Common myeloid progenitor, CD34-positive (primary cell): ENCODE measurements at regions of chr7 and their contacts with region 1.

Region 1: GRCh38 chr7:140242057-140243031 is 65.6 kb upstream of the KDM7A start:
- DNase-seq: peak; percentile 76 to 94 (median 89)
- H3K4me3 ChIP-seq: peak overlapping the region in 3 of 7 experiments; percentile 22 to 47 (median 32)
- H3K27ac ChIP-seq: peak overlapping the region in 1 of 2 experiments; percentile 82
- H3K4me1 ChIP-seq: peaks cover 11 to 20% (median 18%) of the 10 kb centered on the region in 4 experiments
- H3K27me3 ChIP-seq: no peaks in the 10 kb centered on the region

Region 2: DNA sequence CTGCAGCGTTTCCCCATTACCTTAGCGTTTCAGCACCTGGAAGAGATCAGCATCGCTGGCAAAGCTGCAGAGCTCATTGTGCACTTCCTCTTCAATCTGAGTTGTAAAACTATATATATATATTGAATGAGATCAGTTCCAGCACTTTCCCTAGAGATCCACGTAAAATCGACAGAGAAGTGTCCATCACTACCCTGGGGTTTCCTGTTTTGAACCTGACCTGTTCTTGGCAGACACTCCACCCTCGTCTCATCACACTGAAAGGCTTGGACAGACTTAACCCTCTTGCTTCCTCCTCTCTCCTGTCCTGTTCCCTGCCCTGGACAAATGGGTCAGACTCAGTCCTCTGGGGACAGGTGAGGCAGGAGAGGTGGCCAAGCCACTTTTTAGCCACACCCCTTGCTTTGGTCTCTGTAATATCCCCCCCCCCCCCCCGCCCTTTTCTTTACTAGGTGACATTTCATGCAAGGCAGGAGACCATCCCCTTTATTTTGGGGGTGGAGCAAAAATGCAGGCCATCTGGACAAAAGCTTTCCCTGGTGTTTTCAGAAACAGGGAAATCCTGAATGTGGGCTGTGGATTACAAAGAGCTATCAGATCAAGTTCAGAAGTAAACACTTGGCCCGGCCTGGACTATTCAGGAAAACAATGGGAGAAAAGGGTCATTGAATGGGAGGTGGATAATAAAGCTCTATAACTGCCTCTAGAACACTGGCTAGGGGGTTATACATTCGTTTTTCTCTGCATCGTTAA is 18.2 kb after region 1 on chr7:
- CTCF ChIA-PET with region 1: interaction called, 35 read pairs
- POLR2A ChIA-PET with region 1: no interaction called
- DNase-seq: peak in 1 of 3 donors; percentile 21
- H3K4me3 ChIP-seq: no peak overlapping the region
- H3K27ac ChIP-seq: no peak overlapping the region
- H3K4me1 ChIP-seq: peaks cover 0 to 12% (median 8%) of the 10 kb centered on the region in 4 experiments
- H3K27me3 ChIP-seq: peaks cover 0 to 2% (median 0%) of the 10 kb centered on the region in 5 experiments